ENCODE measurements at regions of chr6 and their contacts with region 1.

Region 1: DNA sequence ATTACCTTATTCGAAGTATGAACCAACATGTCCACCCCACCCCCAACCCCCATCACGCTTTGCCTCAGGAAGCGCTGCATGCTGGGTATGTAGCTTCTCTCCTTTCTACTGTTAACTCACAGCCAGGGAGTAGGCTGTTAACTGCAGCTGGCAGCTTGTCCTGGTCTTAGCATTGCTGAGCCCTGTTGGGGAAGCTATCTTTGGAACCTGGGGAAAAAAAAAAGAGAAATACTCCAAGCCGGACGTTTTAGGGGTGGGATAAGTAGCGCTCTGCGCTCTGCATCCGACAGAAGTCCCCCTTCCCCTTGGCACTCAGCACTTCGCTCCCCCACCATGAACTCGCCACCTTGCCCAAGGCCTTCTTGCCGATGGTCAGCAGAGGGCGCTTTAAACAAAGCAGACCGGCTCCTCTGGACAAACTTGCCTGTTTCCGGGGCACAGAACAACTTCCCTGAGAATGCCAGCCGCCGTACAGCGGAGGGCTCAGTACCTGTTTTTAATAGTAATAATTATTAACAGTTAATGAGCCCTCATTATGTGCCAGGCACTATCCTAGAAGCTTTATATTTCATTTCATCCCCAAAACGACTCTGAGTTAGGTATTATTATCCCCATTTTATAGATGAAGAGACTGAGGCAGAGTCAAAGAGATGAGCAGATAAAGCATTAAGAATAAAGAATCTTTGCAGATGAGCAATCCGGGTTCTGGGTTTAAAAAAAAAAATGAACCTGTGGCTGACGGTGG is 35.2 kb upstream of the MDFI start:
- DNase-seq: peak; percentile 84
- H3K27ac ChIP-seq: no peak overlapping the region
- CTCF ChIP-seq: peak; percentile 89

Region 2: GRCh38 chr6:41367700-41368099 is 235.3 kb before region 1 on chr6:
- CTCF ChIA-PET with region 1: interaction called, 11 read pairs
- POLR2A ChIA-PET with region 1: no interaction called
- DNase-seq: peak; percentile 68
- H3K27ac ChIP-seq: no peak overlapping the region
- CTCF ChIP-seq: peak; percentile 50

Region 3: GRCh38 chr6:41615254-41615653 is 12.2 kb after region 1 on chr6:
- CTCF ChIA-PET with region 1: interaction called, 10 read pairs
- POLR2A ChIA-PET with region 1: no interaction called
- DNase-seq: no peak
- H3K27ac ChIP-seq: no peak overlapping the region
- CTCF ChIP-seq: no peak

Region 4: GRCh38 chr6:41683510-41684310 is 80.7 kb after region 1 on chr6:
- CTCF ChIA-PET with region 1: interaction called, 53 read pairs
- POLR2A ChIA-PET with region 1: interaction called, 3 read pairs
- DNase-seq: peak; percentile 74
- H3K27ac ChIP-seq: peak overlapping the region; percentile 56
- CTCF ChIP-seq: peak; percentile 88

Measured in RWPE1 (cell line).